ENCODE measurements at regions of chr12 and their contacts with region 1.

Region 1: GRCh38 chr12:67758119-67758518 is 109.6 kb downstream of the DYRK2 start:
- DNase-seq: peak; percentile 93
- H3K4me3 ChIP-seq: peak overlapping the region; percentile 13
- H3K27ac ChIP-seq: peak overlapping the region; percentile 78
- H3K4me1 ChIP-seq: peaks cover 65% of the 10 kb centered on the region
- CTCF ChIP-seq: 0 out of 2 replicates have a peak, but pooled peaks have one; percentile 26

Region 2: GRCh38 chr12:67452119-67452805 is 305.9 kb before region 1 on chr12:
- CTCF ChIA-PET with region 1: no interaction called
- POLR2A ChIA-PET with region 1: no interaction called
- intact Hi-C with region 1: loop called (anchors 5 kb)
- DNase-seq: peak; percentile 79
- H3K4me3 ChIP-seq: no peak overlapping the region
- H3K27ac ChIP-seq: peak overlapping the region; percentile 14
- H3K4me1 ChIP-seq: peaks cover 24% of the 10 kb centered on the region
- CTCF ChIP-seq: no peak

Region 3: GRCh38 chr12:67698672-67699581 is 59.2 kb before region 1 on chr12:
- CTCF ChIA-PET with region 1: no interaction called
- POLR2A ChIA-PET with region 1: interaction called, 3 read pairs
- intact Hi-C with region 1: loop called (anchors 1 kb)
- DNase-seq: peak; percentile 88
- H3K4me3 ChIP-seq: peak overlapping the region; percentile 59
- H3K27ac ChIP-seq: peak overlapping the region; percentile 83
- H3K4me1 ChIP-seq: peaks cover 72% of the 10 kb centered on the region
- CTCF ChIP-seq: no peak